Activated T-helper 1 cell treated with anti-CD3 and anti-CD28 coated beads, Interleukin-12 subunit alpha, Interleukin-12 subunit beta, Interleukin-2, Interleukin-4 antibody, amounts not matched to agents 30 ng/mL and 10 ng/mL and 1 ng/mL, durations not matched to agents 14 hours and 24 hours and 36 hours (primary cell): ENCODE measurements at regions of chr14 and their contacts with region 1.

Region 1: GRCh38 chr14:61694830-61695694 is at the start of gene HIF1A:
- DNase-seq: peak; percentile 95
- H3K4me3 Mint-ChIP-seq: peak within 1 kb of the TSS; percentile 94
- H3K27ac Mint-ChIP-seq: peak within 1 kb of the TSS; percentile 97
- H3K4me1 Mint-ChIP-seq: peaks cover 63% of the 10 kb centered on the region
- H3K27me3 Mint-ChIP-seq: no peaks in the 10 kb centered on the region
- total RNA-seq, gene HIF1A: 241 and 247 TPM in 2 replicates

Region 2: DNA sequence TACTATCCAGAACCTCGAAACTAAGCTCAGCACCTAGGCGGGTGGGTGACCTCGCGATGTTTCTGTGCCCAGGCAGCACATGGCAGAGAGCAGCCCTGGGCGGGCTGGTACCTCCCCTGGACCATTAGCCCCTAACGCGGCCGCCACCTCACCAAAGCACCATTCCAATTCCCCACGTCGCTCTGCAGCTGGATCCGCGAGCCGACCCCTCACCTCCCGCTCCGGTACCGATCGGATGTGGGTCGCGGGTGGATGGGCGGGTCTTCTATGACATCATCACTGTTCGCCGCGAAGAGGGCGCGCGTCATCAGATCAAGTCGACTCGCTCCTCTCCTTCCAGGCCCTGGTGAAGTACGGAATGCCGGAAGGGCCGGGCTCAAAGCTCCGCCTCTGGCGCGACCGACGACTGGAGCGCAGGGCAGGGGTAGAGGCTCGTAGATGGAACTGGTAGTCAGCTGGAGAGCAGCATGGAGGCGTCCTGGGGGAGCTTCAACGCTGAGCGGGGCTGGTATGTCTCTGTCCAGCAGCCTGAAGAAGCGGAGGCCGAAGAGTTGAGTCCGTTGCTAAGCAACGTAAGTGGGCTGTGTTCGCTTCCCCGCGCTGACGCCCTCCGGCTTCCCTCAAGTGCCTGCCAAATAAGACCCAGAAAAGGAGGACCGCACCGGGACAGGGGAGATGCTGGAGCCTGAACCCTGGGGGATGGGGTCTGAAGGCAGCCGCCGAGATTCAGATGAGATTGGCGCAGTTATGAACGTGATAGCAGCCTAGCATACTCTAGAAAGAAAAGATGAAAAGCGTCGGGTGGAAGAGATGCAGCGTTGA is 714.0 kb before region 1 on chr14 and contains the starts of genes SLC38A6 and TRMT5:
- intact Hi-C with region 1: loop called (anchors 5 kb)
- DNase-seq: peak; percentile 88
- H3K4me3 Mint-ChIP-seq: no peak within 1 kb of the TSS
- H3K27ac Mint-ChIP-seq: no peak within 1 kb of the TSS
- H3K4me1 Mint-ChIP-seq: peaks cover 17% of the 10 kb centered on the region
- H3K27me3 Mint-ChIP-seq: no peaks in the 10 kb centered on the region
- total RNA-seq, gene SLC38A6: 4.5 and 4.7 TPM in 2 replicates
- total RNA-seq, gene TRMT5: 17.4 and 19.2 TPM in 2 replicates

Region 3: GRCh38 chr14:61342486-61342885 is 352.6 kb before region 1 on chr14:
- intact Hi-C with region 1: loop called (anchors 5 kb)
- DNase-seq: peak; percentile 85
- H3K4me3 Mint-ChIP-seq: peak overlapping the region; percentile 82
- H3K27ac Mint-ChIP-seq: peak overlapping the region; percentile 97
- H3K4me1 Mint-ChIP-seq: peaks cover 92% of the 10 kb centered on the region
- H3K27me3 Mint-ChIP-seq: no peaks in the 10 kb centered on the region

Region 4: GRCh38 chr14:61620130-61620946 is 74.7 kb before region 1 on chr14:
- intact Hi-C with region 1: loop called (anchors 2 kb)
- DNase-seq: no peak
- H3K4me3 Mint-ChIP-seq: no peak overlapping the region
- H3K27ac Mint-ChIP-seq: peak overlapping the region; percentile 31
- H3K4me1 Mint-ChIP-seq: peaks cover 54% of the 10 kb centered on the region
- H3K27me3 Mint-ChIP-seq: no peaks in the 10 kb centered on the region

Region 5: GRCh38 chr14:61730756-61731373 is 35.8 kb after region 1 on chr14:
- intact Hi-C with region 1: loop called (anchors 5 kb)
- DNase-seq: no peak
- H3K4me3 Mint-ChIP-seq: peak overlapping the region; percentile 8
- H3K27ac Mint-ChIP-seq: peak overlapping the region; percentile 61
- H3K4me1 Mint-ChIP-seq: peaks cover 82% of the 10 kb centered on the region
- H3K27me3 Mint-ChIP-seq: no peaks in the 10 kb centered on the region

Region 6: GRCh38 chr14:61761959-61762786 is 67.1 kb after region 1 on chr14 and contains the start of gene SNAPC1:
- intact Hi-C with region 1: loop called (anchors 1 kb)
- DNase-seq: peak; percentile 97
- H3K4me3 Mint-ChIP-seq: peak within 1 kb of the TSS; percentile 91
- H3K27ac Mint-ChIP-seq: peak within 1 kb of the TSS; percentile 90
- H3K4me1 Mint-ChIP-seq: peaks cover 59% of the 10 kb centered on the region
- H3K27me3 Mint-ChIP-seq: peaks cover 3% of the 10 kb centered on the region
- total RNA-seq, gene SNAPC1: 10.8 and 11.0 TPM in 2 replicates